Activated CD4-positive, alpha-beta T cell treated with anti-CD3 and anti-CD28 coated beads, Interleukin-2, amount 10 ng/mL, durations not matched to agents 24 days and 14 days (primary cell): ENCODE measurements at regions of chr11 and their contacts with region 1.

Region 1: DNA sequence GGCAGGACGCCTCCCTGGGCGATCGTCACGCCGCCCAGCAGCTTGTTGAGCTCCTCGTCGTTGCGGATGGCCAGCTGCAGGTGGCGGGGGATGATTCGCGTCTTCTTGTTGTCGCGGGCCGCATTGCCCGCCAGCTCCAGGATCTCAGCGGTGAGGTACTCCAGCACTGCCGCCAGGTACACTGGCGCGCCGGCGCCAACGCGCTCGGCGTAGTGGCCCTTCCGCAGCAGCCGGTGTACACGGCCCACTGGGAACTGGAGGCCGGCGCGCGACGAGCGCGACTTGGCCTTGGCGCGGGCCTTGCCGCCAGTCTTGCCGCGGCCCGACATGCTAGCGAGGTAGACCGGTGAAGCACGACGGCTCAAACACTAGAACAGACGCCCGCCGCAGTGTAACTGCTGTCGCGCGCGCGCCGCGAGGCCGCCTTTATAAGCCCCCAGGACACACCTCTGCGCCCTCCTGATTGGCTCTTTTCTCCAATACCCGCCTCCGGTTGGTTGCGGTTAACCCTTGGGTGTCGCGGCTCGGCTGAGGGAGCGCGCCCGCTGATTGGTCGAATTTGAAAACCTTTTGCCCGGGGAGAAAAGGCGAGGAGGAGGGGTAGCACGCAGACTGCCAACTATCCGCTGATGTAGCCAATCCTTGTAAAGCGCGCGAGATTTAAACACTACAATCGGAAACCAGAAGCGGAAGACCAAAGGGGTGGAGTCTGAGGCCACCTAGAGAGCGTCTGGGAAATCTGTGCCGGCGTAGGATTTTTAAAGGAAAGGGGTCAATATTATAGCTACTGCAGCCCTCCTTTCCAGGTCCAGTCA is 6.4 kb downstream of the DPAGT1 start:
- DNase-seq: peak; percentile 100
- H3K4me3 Mint-ChIP-seq: peak overlapping the region; percentile 95
- H3K27ac Mint-ChIP-seq: peak overlapping the region; percentile 92
- H3K4me1 Mint-ChIP-seq: peaks cover 60% of the 10 kb centered on the region
- H3K27me3 Mint-ChIP-seq: peaks cover 2% of the 10 kb centered on the region

Region 2: GRCh38 chr11:119018074-119018938 is 77.0 kb before region 1 on chr11 and contains the starts of genes RPS25 and TRAPPC4:
- intact Hi-C with region 1: loop called (anchors 1 kb)
- DNase-seq: peak; percentile 98
- H3K4me3 Mint-ChIP-seq: peak within 1 kb of the TSS; percentile 100
- H3K27ac Mint-ChIP-seq: peak within 1 kb of the TSS; percentile 99
- H3K4me1 Mint-ChIP-seq: peaks cover 35% of the 10 kb centered on the region
- H3K27me3 Mint-ChIP-seq: no peaks in the 10 kb centered on the region
- total RNA-seq, gene RPS25: 1,641 and 1,650 TPM in 2 replicates
- total RNA-seq, gene TRAPPC4: 141 and 151 TPM in 2 replicates

Region 3: DNA sequence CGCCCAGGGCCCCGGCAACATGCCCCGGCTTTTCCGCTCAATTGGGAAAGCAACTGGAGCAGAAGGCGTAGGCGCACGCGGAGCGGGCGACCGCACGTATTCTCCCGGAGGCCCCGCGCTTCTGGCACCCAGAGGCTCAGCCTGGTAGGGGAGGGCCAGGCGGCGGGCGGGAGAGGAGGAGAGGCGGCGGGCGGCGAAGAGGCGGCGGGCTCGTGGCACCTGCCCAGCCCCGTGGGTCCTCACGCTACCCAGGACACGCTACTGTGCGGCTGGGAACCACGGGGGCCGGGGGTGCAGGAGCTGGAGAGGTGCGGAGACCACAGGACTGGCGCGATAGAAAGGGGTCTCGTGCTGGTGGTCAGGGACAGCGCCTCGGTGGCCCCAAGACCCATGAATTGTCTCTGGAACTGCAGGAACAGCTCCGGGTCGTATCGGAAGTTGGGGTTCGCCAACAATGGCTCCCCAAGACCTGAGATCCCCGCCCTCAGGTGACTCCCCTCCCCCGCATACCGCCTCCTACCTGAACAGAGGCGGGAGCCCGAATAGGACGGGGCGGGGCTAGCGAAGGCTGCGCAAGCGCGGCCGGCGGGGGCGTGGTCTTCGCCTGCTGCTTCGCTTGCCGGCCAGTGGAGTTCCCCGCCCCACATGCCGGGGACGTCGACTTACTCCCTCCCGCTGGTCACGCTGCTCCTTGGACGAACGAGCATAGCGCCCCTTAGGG is 64.8 kb before region 1 on chr11 and contains the start of gene SLC37A4:
- intact Hi-C with region 1: no loop called
- DNase-seq: peak; percentile 100
- H3K4me3 Mint-ChIP-seq: peak within 1 kb of the TSS; percentile 83
- H3K27ac Mint-ChIP-seq: peak within 1 kb of the TSS; percentile 89
- H3K4me1 Mint-ChIP-seq: peaks cover 19% of the 10 kb centered on the region
- H3K27me3 Mint-ChIP-seq: no peaks in the 10 kb centered on the region
- total RNA-seq, gene SLC37A4: 28.8 and 31.6 TPM in 2 replicates

Region 4: DNA sequence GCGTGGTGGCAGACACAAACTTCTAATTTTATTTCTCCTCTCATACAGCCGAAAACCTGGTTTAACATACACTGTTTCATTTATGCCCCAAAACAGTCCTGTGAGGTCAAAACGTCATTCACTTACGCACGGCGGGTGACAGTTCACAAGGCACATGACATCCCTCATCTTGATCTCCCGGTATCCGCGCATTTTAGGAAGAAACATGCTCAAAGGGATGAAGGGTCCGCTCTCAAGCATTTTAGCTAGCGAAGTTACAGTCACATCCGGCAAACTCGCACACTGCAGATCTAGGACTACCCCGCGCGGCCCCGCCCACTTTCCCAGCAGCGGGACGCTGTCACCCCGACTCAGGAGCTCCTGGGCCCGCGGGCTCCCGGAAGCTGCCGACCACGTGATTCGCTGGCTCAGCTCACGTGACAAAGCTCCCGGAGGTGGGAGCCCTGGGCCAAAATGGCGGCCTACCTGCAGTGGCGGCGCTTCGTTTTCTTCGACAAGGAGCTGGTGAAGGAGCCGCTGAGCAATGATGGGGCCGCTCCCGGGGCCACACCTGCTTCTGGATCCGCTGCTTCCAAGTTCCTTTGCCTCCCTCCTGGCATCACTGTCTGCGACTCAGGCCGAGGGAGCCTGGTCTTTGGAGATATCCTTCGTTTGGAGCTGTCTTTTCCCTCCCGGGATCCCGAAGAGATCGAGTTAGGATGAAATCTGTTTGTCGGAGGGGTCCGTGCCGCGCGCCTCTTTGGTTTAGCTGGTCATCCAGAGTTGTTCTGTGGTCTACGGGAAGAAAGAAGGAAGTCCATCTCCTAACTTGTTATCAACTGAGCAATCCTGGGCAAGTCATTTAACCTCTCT is 27.7 kb before region 1 on chr11 and contains the start of gene VPS11:
- intact Hi-C with region 1: loop called (anchors 1 kb)
- DNase-seq: peak; percentile 99
- H3K4me3 Mint-ChIP-seq: peak within 1 kb of the TSS; percentile 92
- H3K27ac Mint-ChIP-seq: peak within 1 kb of the TSS; percentile 93
- H3K4me1 Mint-ChIP-seq: peaks cover 22% of the 10 kb centered on the region
- H3K27me3 Mint-ChIP-seq: no peaks in the 10 kb centered on the region
- total RNA-seq, gene VPS11: 20.2 and 20.9 TPM in 2 replicates

Region 5: DNA sequence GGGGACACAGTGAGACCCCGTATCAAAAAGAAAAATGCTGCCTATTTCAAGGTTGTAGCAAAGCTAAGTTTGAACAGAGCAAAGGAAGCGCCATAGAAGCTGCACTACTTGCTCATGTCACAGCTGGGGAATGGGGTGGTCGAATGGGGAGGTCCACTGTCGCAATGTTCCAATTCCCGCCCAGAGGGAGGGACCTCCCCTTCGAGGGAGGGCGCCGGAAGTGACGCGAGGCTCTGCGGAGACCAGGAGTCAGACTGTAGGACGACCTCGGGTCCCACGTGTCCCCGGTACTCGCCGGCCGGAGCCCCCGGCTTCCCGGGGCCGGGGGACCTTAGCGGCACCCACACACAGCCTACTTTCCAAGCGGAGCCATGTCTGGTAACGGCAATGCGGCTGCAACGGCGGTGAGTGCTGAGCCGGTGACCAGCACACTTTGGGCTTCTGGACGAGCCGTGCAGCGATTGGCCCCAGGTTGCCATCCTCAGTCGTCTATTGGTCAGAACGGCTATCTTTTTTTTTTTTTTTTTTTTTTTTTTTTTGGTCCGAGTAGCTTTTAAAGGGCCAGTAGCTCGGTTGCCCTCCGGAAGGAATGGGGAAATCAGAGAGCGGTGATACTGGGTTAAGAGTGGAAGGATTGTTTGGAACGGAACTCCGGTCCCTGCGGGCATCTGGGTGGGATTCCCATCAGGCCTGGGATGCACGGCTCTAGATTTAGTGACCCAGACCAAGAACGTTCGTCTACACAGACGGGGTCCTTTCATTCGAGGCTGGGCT is 10.4 kb before region 1 on chr11 and contains the start of gene HMBS:
- intact Hi-C with region 1: loop called (anchors 1 kb)
- DNase-seq: peak; percentile 98
- H3K4me3 Mint-ChIP-seq: peak within 1 kb of the TSS; percentile 97
- H3K27ac Mint-ChIP-seq: peak within 1 kb of the TSS; percentile 95
- H3K4me1 Mint-ChIP-seq: peaks cover 24% of the 10 kb centered on the region
- H3K27me3 Mint-ChIP-seq: no peaks in the 10 kb centered on the region
- total RNA-seq, gene HMBS: 60.9 and 62.8 TPM in 2 replicates

Region 6: GRCh38 chr11:119121008-119121810 is 25.9 kb after region 1 on chr11 and contains the start of gene HINFP:
- intact Hi-C with region 1: loop called (anchors 1 kb)
- DNase-seq: peak; percentile 100
- H3K4me3 Mint-ChIP-seq: peak within 1 kb of the TSS; percentile 98
- H3K27ac Mint-ChIP-seq: peak within 1 kb of the TSS; percentile 89
- H3K4me1 Mint-ChIP-seq: peaks cover 26% of the 10 kb centered on the region
- H3K27me3 Mint-ChIP-seq: no peaks in the 10 kb centered on the region
- total RNA-seq, gene HINFP: 34.9 and 41.4 TPM in 2 replicates

Region 7: DNA sequence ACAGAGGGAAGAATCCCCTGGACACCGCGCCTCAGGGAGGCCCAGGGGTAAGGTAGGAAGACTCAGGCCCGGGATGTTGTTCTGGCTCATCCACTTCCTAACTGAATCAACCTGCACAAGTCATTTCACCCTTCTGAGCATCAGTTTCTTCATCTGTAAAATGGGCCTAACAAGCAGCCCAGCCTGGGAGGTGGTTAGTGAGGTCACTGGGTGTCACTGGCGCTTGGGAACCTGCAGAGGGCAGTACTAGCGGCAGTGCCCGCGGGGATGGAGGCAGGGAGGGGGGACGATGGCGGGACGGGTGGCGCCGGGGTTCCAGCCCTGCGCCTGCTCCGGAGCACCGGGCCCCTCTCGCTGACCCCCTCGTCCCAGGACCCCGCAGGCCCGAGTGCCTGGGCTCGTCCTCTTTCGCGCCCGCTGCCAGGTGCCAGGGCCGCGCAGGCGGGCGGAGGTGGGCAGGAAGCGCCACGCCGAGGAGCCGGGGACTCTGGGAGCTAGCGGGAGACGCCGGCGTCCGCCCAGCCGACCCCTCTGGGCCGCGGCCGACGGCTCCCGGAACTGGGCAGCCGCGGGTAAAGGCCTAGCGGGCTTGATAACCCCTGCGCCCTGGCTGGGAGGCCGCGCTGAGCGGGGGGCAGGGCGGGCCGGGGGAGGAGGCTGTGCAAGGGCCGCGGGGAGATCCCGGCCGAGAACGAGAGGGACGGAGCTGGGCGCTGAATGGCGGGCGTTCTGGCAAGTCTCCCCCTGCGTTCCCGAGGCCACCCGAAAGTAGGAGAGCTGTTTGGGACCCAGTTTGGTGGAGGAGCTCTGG is 73.4 kb after region 1 on chr11 and contains the start of gene NLRX1:
- intact Hi-C with region 1: loop called (anchors 2 kb)
- DNase-seq: peak; percentile 95
- H3K4me3 Mint-ChIP-seq: peak within 1 kb of the TSS; percentile 94
- H3K27ac Mint-ChIP-seq: peak within 1 kb of the TSS; percentile 94
- H3K4me1 Mint-ChIP-seq: peaks cover 16% of the 10 kb centered on the region
- H3K27me3 Mint-ChIP-seq: no peaks in the 10 kb centered on the region
- total RNA-seq, gene NLRX1: 23.3 and 25.0 TPM in 2 replicates

Region 8: DNA sequence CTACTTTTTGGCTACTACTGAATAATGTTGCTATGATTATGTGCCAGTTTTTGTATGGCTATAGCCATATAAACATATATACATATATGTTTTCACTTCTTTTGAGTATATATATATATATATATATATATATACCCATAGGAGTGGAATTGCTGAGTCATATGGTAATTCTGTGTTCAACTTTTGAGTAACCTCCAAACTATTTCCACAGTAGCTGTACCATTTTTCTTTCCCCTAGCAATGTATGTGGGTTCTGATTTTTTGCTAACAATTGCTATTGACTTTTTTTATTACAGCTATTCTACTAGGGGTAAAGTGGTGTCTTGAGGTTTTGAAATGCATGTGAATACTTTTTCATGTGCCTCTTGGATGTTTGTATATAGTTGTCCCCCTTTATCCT is 141.2 kb after region 1 on chr11:
- intact Hi-C with region 1: no loop called
- DNase-seq: no peak
- H3K4me3 Mint-ChIP-seq: no peak overlapping the region
- H3K27ac Mint-ChIP-seq: peak overlapping the region; percentile 94
- H3K4me1 Mint-ChIP-seq: peaks cover 39% of the 10 kb centered on the region
- H3K27me3 Mint-ChIP-seq: no peaks in the 10 kb centered on the region